Activated CD8-positive, alpha-beta T cell treated with anti-CD3 and anti-CD28 coated beads for 36 hours (primary cell): ENCODE measurements at regions of chr11 and their contacts with region 1.

Region 1: DNA sequence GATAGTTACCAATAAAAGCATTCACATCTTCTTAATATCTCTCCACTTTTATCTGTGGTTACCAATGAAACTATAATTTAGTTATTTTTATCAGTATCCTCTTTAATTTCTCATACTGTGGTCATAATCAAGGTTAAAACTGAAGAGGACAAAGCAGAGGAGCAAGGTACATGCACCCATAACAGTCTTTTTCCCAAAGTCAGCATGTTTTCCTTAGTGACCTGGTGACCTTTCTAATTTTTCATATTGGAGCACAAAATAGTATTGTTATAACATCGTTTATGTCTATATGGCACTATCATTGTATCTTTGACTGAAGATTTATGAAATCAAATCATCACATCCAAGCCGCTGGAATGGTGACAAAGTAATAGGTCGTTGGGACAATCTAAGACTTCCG is 51.5 kb upstream of the CHORDC1 start:
- DNase-seq: no peak
- ATAC-seq: no peak
- H3K4me3 Mint-ChIP-seq: no peak overlapping the region
- H3K27ac Mint-ChIP-seq: no peak overlapping the region
- H3K4me1 Mint-ChIP-seq: no peaks in the 10 kb centered on the region
- H3K27me3 Mint-ChIP-seq: peaks cover 7% of the 10 kb centered on the region
- CTCF ChIP-seq: no peak

Region 2: DNA sequence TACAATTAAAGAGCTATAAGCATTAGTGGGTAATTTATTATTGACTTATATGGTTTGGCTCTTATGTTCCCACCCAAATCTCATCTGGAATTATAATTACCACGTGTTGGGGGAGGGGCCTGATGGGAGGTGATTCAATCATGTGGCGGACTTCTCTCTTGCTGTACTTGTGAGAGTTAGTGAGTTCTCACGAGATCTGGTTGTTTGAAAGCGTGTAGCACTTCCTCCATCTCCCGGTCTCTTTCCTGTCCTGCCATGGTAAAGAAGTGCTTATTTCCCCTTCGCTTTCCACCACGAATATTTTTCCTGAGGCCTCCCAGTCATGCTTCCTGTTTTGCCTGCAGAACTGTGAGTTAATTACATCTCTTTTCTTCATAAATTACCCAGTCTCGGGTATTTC is 23.4 kb before region 1 on chr11:
- CTCF ChIA-PET with region 1: no interaction called
- POLR2A ChIA-PET with region 1: no interaction called
- intact Hi-C with region 1: no loop called
- DNase-seq: peak; percentile 28
- ATAC-seq: peak; percentile 80
- H3K4me3 Mint-ChIP-seq: peak overlapping the region; percentile 74
- H3K27ac Mint-ChIP-seq: peak overlapping the region; percentile 63
- H3K4me1 Mint-ChIP-seq: peaks cover 13% of the 10 kb centered on the region
- H3K27me3 Mint-ChIP-seq: peaks cover 6% of the 10 kb centered on the region
- CTCF ChIP-seq: no peak

Region 3: GRCh38 chr11:90332415-90332814 is 58.1 kb after region 1 on chr11:
- CTCF ChIA-PET with region 1: no interaction called
- POLR2A ChIA-PET with region 1: no interaction called
- intact Hi-C with region 1: loop called (anchors 10 kb)
- DNase-seq: no peak
- ATAC-seq: no peak
- H3K4me3 Mint-ChIP-seq: no peak overlapping the region
- H3K27ac Mint-ChIP-seq: no peak overlapping the region
- H3K4me1 Mint-ChIP-seq: no peaks in the 10 kb centered on the region
- H3K27me3 Mint-ChIP-seq: peaks cover 1% of the 10 kb centered on the region
- CTCF ChIP-seq: no peak

Region 4: GRCh38 chr11:90500922-90501568 is 226.7 kb after region 1 on chr11:
- CTCF ChIA-PET with region 1: no interaction called
- POLR2A ChIA-PET with region 1: no interaction called
- intact Hi-C with region 1: no loop called
- DNase-seq: no peak
- ATAC-seq: no peak
- H3K4me3 Mint-ChIP-seq: no peak overlapping the region
- H3K27ac Mint-ChIP-seq: no peak overlapping the region
- H3K4me1 Mint-ChIP-seq: no peaks in the 10 kb centered on the region
- H3K27me3 Mint-ChIP-seq: no peaks in the 10 kb centered on the region
- CTCF ChIP-seq: no peak